Endothelial cell of umbilical vein (primary cell): ENCODE measurements at regions of chr1 and their contacts with region 1.

Region 1: GRCh38 chr1:243842978-243843511 is 7.0 kb downstream of the AKT3 start:
- DNase-seq: peak; percentile 92
- H3K4me3 ChIP-seq: peak overlapping the region in 2 of 3 experiments; percentile 17 to 65
- H3K27ac ChIP-seq: peak overlapping the region; percentile 59
- H3K4me1 ChIP-seq: peaks cover 30% of the 10 kb centered on the region
- H3K27me3 ChIP-seq: no peaks in the 10 kb centered on the region
- CTCF ChIP-seq: no peak
- POLR2A ChIP-seq: peak; percentile 45

Region 2: DNA sequence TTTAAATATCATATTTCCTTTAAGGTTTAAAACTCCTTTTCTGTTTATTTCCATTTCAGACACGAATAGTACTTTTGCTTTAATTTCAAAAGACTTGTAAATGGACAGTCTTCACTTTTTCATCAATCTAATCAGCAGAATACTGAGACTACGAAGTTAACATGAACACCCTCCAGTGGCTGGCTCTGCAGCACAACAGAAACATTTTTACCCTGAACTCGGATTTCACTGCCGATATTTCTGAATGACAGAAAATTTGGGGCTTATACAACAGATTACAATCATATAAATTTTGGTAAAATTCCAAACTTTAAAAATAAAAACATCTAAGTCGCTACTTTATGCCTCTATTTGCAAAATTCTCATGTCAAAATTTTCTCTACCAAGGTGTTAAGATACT is 79.2 kb before region 1 on chr1:
- CTCF ChIA-PET with region 1: no interaction called
- POLR2A ChIA-PET with region 1: no interaction called
- dilution Hi-C with region 1: no loop called
- intact Hi-C with region 1: loop called (anchors 5 kb)
- DNase-seq: no peak
- H3K4me3 ChIP-seq: no peak overlapping the region
- H3K27ac ChIP-seq: no peak overlapping the region
- H3K4me1 ChIP-seq: no peaks in the 10 kb centered on the region
- H3K27me3 ChIP-seq: no peaks in the 10 kb centered on the region
- CTCF ChIP-seq: no peak
- POLR2A ChIP-seq: no peak

Region 3: GRCh38 chr1:243791586-243792267 is 51.3 kb before region 1 on chr1:
- CTCF ChIA-PET with region 1: interaction called, 4 read pairs
- POLR2A ChIA-PET with region 1: no interaction called
- dilution Hi-C with region 1: no loop called
- intact Hi-C with region 1: loop called (anchors 2 kb)
- DNase-seq: peak; percentile 88
- H3K4me3 ChIP-seq: no peak overlapping the region
- H3K27ac ChIP-seq: peak overlapping the region; percentile 63
- H3K4me1 ChIP-seq: peaks cover 24% of the 10 kb centered on the region
- H3K27me3 ChIP-seq: no peaks in the 10 kb centered on the region
- CTCF ChIP-seq: no peak
- POLR2A ChIP-seq: no peak

Region 4: DNA sequence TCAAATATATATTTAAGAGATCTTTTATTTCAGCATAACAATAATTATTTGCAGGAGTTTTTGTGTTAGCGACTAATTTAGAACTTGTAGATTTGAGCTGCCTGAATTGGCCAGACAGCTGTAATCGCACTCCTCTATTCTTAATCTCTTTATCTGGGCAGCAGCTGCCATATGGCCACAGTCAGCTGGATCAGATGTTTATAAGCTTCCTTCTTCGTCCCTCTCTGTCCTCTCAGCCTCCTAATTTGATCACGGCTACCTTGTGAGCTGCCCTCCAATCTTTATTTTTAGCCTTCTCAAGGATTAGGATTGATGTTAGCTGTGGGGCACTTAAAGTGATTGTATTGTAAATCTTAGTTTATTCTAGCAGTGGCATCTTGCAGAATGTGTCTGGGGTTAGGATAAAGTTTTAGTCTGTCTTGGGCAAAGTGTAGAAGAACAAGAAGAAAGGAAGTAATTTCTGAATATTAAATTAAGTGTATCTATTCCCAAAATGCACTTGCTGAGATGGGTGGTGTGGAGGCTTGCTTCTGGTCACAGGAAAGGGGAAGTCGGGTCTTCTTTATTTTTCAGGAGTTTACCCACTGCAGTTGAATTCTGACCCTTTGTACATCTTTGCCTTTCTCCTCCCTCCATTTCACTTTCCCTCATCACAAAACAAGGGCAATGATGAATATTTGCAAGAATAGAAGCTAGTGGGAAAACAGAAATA is 209.1 kb after region 1 on chr1:
- CTCF ChIA-PET with region 1: no interaction called
- POLR2A ChIA-PET with region 1: no interaction called
- dilution Hi-C with region 1: no loop called
- intact Hi-C with region 1: no loop called
- DNase-seq: peak; percentile 56
- H3K4me3 ChIP-seq: peak overlapping the region in 1 of 3 experiments; percentile 93
- H3K27ac ChIP-seq: no peak overlapping the region
- H3K4me1 ChIP-seq: peaks cover 25% of the 10 kb centered on the region
- H3K27me3 ChIP-seq: no peaks in the 10 kb centered on the region
- CTCF ChIP-seq: no peak
- POLR2A ChIP-seq: no peak